ENCODE measurements at regions of chr20 and their contacts with region 1.

Region 1: DNA sequence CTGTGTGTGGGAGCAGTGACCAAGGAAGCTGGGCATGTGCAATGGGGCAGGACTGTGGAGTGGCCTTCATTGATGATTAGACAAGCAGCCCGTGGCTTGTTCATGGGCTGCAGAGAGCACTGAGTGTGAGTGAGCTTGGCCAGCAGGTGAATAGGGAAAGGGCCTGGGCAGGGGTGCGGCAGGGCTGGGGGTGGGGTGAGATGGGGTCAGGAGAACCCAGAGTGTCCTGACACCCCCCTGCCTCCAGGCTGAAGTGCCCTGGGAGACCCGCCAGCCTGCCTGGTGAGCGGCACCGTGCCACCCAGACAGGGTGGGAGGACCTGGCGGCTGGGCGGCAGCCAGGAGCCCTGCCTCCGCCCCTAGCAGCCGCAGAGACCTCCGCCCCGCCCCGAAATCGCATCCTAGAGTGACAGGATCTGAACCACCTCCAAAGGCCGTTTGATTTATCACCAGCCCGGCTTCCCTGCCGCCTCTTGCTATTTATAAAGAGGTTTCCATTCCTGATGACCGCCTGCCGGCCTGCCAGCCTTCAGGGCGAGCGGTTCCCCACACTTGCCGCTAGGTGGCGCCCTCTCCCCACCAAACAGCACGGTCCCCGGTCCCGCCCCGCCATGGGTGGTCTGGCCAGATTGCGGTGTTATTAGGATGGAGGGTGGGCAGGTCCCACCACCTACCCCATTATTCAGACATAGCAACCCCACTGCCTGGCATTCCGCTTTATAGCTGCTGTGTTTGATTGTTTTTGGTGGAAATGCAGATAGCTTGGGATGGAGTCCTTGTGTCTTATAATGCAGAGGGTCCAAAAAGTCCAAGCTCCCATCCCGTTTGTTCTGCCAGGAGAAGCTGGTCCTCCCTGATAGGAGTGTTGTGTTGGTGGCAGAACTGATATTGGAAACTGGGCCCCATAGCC is 3.5 kb downstream of the MYLK2 start:
- DNase-seq: no peak
- H3K4me3 ChIP-seq: peak overlapping the region; percentile 13; the same call in 1 of the 2 replicates
- H3K27ac ChIP-seq: no peak overlapping the region
- H3K27me3 ChIP-seq: peaks cover 2% of the 10 kb centered on the region
- CTCF ChIP-seq: peak; percentile 94

Region 2: GRCh38 chr20:31811796-31812728 is 10.6 kb before region 1 on chr20:
- CTCF ChIA-PET with region 1: interaction called, 13 read pairs
- POLR2A ChIA-PET with region 1: no interaction called
- DNase-seq: peak; percentile 84
- H3K4me3 ChIP-seq: no peak overlapping the region; the same call in 1 of the 2 replicates
- H3K27ac ChIP-seq: peak overlapping the region; percentile 69
- H3K27me3 ChIP-seq: no peaks in the 10 kb centered on the region
- CTCF ChIP-seq: no peak

Region 3: DNA sequence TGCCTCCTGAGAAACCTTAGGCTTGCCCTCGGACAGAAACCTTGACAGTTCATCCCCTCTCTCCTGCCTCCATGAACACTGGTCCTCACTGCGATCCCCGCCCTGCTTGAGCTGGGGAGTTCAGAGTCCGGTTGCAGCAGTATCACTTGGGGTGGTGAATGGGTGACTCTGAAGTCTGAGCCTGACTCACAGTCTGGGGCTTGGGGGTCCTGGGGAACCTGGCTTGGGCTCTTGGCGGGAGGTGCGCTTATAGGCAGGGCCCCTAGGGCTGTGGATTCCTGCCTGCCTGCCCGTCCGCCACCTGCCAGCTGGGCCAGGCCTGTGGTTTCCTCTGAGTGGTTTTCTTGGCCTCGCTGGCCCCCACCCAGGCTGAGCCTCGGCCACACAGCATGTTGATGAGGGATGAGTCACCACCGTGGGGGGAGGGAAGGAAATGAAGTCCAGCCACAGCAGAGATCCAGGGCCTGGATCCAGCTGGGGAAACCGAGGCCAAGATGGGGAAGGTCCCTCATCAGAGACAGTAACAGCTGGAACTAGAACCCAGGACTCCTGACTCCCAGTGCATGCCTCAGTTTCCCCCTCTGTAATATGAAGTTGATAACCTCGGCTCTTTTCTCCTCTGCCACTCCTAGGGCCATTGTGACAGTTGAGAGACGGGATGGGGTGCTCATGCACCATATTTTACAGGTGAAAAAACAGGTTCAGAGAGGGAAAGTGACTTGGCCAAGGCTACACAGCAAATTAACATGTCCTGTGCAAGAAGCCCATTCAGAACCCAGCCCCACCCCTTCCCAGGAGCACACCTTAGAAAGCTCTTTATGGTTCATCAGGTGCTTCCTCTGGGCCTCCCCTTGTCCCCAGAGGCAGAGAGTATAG is 13.5 kb after region 1 on chr20:
- CTCF ChIA-PET with region 1: interaction called, 21 read pairs
- POLR2A ChIA-PET with region 1: interaction called, 3 read pairs
- DNase-seq: peak; percentile 74
- H3K4me3 ChIP-seq: no peak overlapping the region
- H3K27ac ChIP-seq: peak overlapping the region; percentile 11
- H3K27me3 ChIP-seq: peaks cover 2% of the 10 kb centered on the region
- CTCF ChIP-seq: no peak

Region 4: DNA sequence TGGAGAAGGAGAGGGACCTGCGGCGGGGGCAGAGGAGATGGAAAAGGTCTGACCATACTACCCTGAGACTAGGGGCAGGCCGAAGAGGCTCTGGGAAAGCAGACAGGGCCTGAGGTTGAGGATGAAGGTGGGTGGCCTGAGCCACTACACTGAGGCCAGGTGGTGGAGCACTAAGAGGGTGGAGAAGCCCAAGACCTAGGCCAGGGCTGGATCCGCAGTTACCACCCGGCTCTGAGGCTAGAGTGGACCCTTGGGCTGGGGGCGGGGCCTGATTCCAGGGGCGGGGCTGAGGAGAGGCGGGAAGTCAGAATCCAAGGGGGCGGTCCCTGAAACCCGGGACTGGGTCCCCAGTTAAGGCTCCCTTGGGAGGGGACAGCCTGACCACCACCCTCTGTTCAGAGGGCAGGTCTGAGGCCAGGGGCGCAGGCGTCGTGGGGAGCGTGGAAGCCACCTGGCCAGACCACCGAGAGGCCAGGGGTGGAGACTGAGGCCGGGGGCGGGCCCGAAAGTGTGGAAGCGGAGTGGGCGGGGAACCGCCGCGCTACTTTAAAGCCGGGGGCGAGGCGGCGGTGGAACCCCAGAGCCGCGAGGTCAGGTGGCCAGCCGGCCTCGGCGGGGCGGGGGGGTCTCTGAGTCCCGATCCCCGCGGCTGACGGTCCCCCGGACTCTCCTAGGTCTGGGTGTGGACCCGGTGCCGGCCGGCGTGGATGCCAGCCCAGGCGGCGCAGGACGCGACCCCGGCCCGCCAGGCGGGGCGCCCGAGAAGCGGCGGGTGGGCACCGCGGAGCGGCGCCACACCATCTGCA is 195.8 kb after region 1 on chr20:
- CTCF ChIA-PET with region 1: no interaction called
- POLR2A ChIA-PET with region 1: no interaction called
- DNase-seq: no peak
- H3K4me3 ChIP-seq: peak overlapping the region; percentile 36; the same call in 1 of the 2 replicates
- H3K27ac ChIP-seq: no peak overlapping the region
- H3K27me3 ChIP-seq: peaks cover 56% of the 10 kb centered on the region
- CTCF ChIP-seq: no peak